MCF 10A (cell line): ENCODE measurements at regions of chr11 and their contacts with region 1.

Region 1: GRCh38 chr11:14148653-14149273 is 186.2 kb downstream of the SPON1 start:
- DNase-seq: peak; percentile 52
- H3K4me3 Mint-ChIP-seq: no peak overlapping the region
- H3K27ac Mint-ChIP-seq: no peak overlapping the region
- H3K4me1 Mint-ChIP-seq: no peaks in the 10 kb centered on the region
- H3K27me3 Mint-ChIP-seq: peaks cover 21% of the 10 kb centered on the region
- CTCF ChIP-seq: peak; percentile 58

Region 2: GRCh38 chr11:13868710-13869397 is 279.9 kb before region 1 on chr11:
- CTCF ChIA-PET with region 1: no interaction called
- POLR2A ChIA-PET with region 1: no interaction called
- intact Hi-C with region 1: loop called (anchors 1 kb)
- DNase-seq: peak; percentile 52
- H3K4me3 Mint-ChIP-seq: no peak overlapping the region
- H3K27ac Mint-ChIP-seq: no peak overlapping the region
- H3K4me1 Mint-ChIP-seq: peaks cover 21% of the 10 kb centered on the region
- H3K27me3 Mint-ChIP-seq: peaks cover 19% of the 10 kb centered on the region
- CTCF ChIP-seq: no peak

Region 3: GRCh38 chr11:13955971-13956421 is 192.8 kb before region 1 on chr11:
- CTCF ChIA-PET with region 1: interaction called, 169 read pairs
- POLR2A ChIA-PET with region 1: no interaction called
- intact Hi-C with region 1: loop called (anchors 1 kb)
- DNase-seq: peak; percentile 72
- H3K4me3 Mint-ChIP-seq: no peak overlapping the region
- H3K27ac Mint-ChIP-seq: no peak overlapping the region
- H3K4me1 Mint-ChIP-seq: no peaks in the 10 kb centered on the region
- H3K27me3 Mint-ChIP-seq: peaks cover 27% of the 10 kb centered on the region
- CTCF ChIP-seq: peak; percentile 82

Region 4: GRCh38 chr11:13970986-13971385 is 177.8 kb before region 1 on chr11:
- CTCF ChIA-PET with region 1: interaction called, 125 read pairs
- POLR2A ChIA-PET with region 1: interaction called, 5 read pairs
- intact Hi-C with region 1: loop called (anchors 1 kb)
- DNase-seq: peak; percentile 64
- H3K4me3 Mint-ChIP-seq: no peak overlapping the region
- H3K27ac Mint-ChIP-seq: no peak overlapping the region
- H3K4me1 Mint-ChIP-seq: no peaks in the 10 kb centered on the region
- H3K27me3 Mint-ChIP-seq: peaks cover 85% of the 10 kb centered on the region
- CTCF ChIP-seq: peak; percentile 50

Region 5: GRCh38 chr11:14114269-14114668 is 34.5 kb before region 1 on chr11:
- CTCF ChIA-PET with region 1: interaction called, 11 read pairs
- POLR2A ChIA-PET with region 1: no interaction called
- intact Hi-C with region 1: no loop called
- DNase-seq: peak; percentile 29
- H3K4me3 Mint-ChIP-seq: no peak overlapping the region
- H3K27ac Mint-ChIP-seq: no peak overlapping the region
- H3K4me1 Mint-ChIP-seq: peaks cover 11% of the 10 kb centered on the region
- H3K27me3 Mint-ChIP-seq: no peaks in the 10 kb centered on the region
- CTCF ChIP-seq: no peak

Region 6: DNA sequence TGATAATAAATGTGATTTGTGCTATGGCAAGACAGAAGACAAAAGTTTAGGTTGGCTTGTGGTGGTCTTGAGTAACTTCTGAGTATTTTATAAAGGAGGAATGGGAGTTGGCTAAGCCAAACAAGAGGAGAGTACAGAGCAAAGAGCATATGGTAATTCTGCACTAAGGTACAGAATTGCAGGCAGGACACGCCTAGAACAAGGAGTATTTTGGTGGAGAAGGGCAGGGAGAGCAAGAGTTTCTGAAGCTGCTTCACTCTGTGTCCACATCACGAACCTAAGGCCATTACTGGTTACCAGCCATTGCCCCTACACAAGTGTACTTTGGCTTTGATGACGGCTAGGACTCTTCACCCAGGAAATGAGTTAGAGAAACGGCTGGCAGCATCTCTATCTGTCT is 15.4 kb before region 1 on chr11:
- CTCF ChIA-PET with region 1: interaction called, 15 read pairs
- POLR2A ChIA-PET with region 1: no interaction called
- intact Hi-C with region 1: no loop called
- DNase-seq: no peak
- H3K4me3 Mint-ChIP-seq: no peak overlapping the region
- H3K27ac Mint-ChIP-seq: no peak overlapping the region
- H3K4me1 Mint-ChIP-seq: no peaks in the 10 kb centered on the region
- H3K27me3 Mint-ChIP-seq: no peaks in the 10 kb centered on the region
- CTCF ChIP-seq: no peak

Region 7: DNA sequence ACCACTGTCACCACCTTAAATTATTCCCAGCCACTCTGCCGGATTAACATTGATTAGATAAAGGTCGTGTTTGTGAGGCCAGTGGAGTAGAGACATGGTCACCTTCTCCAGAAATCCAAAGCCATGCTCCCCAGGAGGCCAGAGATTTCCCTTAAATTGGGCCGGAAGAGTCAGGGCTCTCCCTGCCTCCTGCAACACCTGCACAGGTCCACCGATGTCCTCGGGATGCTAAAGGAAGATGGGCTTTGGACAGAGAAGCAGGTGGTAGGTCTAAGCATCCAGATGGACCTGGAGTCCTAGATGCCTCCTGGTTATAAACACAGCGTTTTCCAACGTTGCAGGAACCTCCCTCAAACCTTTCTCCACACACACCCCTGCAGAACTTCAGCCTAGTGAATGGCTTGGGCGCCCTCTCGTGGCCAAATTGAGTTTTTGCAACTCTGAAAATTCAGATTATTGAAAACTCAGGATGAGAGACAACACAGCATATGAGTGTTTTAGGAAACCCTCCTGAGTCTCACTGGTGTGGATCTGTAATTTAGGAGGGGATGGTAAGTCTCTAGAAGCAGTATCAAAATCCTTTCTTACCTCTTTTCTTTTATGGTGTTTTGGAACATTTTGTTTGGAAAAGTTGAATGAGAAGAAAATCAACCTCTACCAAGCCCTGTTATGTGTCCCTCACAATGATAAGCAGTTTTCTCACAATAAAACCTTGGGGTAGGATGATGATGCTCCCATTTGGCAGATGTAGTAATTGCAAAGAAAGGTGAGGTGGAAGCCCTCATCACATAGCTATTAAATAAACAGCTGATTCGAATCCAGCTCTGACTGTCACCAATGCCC is 100.6 kb after region 1 on chr11:
- CTCF ChIA-PET with region 1: interaction called, 16 read pairs
- POLR2A ChIA-PET with region 1: no interaction called
- intact Hi-C with region 1: loop called (anchors 1 kb)
- DNase-seq: peak; percentile 75
- H3K4me3 Mint-ChIP-seq: no peak overlapping the region
- H3K27ac Mint-ChIP-seq: no peak overlapping the region
- H3K4me1 Mint-ChIP-seq: no peaks in the 10 kb centered on the region
- H3K27me3 Mint-ChIP-seq: peaks cover 69% of the 10 kb centered on the region
- CTCF ChIP-seq: peak; percentile 88

Region 8: DNA sequence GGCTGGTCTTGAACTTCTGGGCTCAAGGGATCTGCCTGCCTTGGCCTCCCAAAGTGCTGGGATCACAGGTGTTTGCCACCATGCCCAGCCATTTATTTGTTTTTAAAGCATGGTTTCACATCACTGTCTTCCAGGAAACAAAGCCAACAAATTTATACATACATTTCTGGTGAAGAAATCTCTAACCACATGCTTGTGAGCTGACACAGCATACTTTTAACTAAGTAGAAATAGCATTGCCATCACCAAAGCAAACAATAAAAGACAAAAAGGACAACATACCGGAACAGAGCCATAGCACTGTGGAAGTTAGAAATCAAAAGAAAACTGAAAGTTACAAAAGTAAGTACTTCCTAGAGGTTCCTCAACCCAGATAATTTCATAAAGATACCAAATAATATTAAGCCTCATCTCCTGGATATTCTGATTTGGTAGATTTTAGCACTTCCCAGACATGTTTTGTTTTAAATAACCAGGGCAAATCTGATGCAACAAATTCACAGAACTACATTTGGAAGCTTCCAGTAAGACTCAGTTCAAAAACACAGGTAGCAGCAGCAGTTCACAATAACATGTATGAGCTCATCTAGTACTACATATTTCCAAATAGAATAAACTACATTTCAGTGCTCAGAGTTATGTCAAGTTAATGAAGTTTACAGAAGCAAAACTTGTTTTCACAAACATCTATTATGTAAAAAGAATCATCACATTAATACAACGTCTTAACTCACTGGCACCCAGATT is 139.6 kb after region 1 on chr11:
- CTCF ChIA-PET with region 1: no interaction called
- POLR2A ChIA-PET with region 1: no interaction called
- intact Hi-C with region 1: no loop called
- DNase-seq: peak; percentile 39
- H3K4me3 Mint-ChIP-seq: peak overlapping the region; percentile 56
- H3K27ac Mint-ChIP-seq: peak overlapping the region; percentile 95
- H3K4me1 Mint-ChIP-seq: peaks cover 16% of the 10 kb centered on the region
- H3K27me3 Mint-ChIP-seq: no peaks in the 10 kb centered on the region
- CTCF ChIP-seq: no peak